ENCODE measurements at regions of chr10 and their contacts with region 1.

Region 1: DNA sequence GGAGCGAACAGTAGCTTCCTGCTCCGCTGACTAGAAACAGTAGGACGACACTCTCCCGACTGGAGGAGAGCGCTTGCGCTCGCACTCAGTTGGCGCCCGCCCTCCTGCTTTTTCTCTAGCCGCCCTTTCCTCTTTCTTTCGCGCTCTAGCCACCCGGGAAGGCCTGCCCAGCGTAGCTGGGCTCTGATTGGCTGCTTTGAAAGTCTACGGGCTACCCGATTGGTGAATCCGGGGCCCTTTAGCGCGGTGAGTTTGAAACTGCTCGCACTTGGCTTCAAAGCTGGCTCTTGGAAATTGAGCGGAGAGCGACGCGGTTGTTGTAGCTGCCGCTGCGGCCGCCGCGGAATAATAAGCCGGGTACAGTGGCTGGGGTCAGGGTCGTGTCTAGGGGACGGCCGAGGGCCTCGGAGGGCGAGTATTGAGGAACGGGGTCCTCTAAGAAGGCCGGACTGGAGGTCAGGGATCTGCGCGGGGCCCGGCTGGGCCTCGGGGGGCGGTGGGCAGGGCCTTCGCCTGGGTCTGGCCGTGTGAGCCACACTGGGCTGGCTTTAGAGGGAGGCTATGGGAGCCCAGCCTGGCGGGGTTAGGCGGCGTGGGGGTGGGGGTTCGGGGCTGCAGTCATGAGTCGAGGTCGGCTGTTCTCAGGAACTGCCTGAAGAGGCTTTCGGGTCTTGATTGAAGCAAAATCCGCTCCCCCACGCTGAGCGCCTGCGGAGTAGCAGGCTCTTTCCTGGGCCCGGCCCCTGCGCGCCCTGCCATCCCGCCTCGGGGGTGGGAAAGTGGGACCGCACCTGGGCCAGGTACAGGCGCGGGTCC is at the start of gene CDK1:
- DNase-seq: peak; percentile 97
- H3K4me3 Mint-ChIP-seq: peak within 1 kb of the TSS; percentile 99
- H3K27ac Mint-ChIP-seq: peak within 1 kb of the TSS; percentile 97
- H3K4me1 Mint-ChIP-seq: peaks cover 40% of the 10 kb centered on the region
- H3K27me3 Mint-ChIP-seq: no peaks in the 10 kb centered on the region
- total RNA-seq, gene CDK1: 121 to 125 TPM

Region 2: DNA sequence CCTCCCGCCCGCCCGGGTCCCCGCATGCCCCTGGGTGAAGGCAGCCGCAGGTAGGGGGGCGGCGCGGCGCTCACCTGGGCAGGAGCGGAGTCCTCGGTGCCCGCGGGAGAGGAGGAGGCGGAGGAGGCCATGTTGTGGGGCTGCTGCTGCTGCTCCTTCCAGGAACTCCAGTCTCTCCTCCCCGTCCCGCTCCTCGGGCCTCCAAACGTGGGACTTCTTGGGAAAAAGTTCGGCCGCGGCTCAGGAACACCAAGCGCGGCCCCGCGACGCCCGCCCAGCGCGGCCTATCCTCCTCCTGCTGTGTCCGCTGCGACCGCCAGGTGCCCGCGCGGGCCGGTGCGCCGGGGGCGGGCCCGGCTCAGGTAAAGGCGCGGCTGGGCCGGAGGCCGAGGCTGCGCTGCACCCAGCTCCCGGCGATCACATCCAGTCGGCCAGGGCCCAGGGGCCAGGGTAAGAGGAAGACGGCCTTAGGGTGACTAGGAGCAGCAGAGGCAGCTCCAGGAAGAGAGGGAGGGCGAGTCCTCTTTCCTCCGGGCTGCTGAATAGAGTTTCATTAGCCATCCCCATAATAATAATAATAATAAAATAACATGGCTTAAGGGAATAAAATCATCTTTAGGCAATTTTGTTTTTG is 45.1 kb before region 1 on chr10:
- CTCF ChIA-PET with region 1: interaction called, 3 read pairs
- POLR2A ChIA-PET with region 1: interaction called, 36 read pairs
- DNase-seq: peak; percentile 51
- H3K4me3 Mint-ChIP-seq: peak overlapping the region; percentile 88
- H3K27ac Mint-ChIP-seq: peak overlapping the region; percentile 38
- H3K4me1 Mint-ChIP-seq: peaks cover 44% of the 10 kb centered on the region
- H3K27me3 Mint-ChIP-seq: peaks cover 16% of the 10 kb centered on the region

Region 3: DNA sequence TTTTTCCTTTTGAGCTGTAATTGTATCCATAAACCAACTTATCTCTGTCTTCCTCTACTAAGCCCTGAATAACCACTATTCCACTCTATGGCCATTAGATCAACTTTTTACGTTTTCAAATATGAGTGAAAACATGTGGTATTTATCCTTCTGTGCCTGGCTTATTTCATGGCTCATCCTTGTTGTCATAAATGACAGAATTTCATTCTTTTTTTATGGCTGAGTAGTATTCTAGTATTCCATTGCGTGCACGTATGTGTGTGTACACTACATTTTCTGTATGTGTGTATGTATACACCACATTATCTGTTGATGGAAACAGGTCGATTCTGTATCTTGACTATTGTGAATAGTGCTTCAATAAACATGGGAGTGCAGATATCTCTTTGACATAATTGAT is 10.9 kb after region 1 on chr10:
- CTCF ChIA-PET with region 1: interaction called, 3 read pairs
- POLR2A ChIA-PET with region 1: interaction called, 16 read pairs
- DNase-seq: no peak
- H3K4me3 Mint-ChIP-seq: no peak overlapping the region
- H3K27ac Mint-ChIP-seq: no peak overlapping the region
- H3K4me1 Mint-ChIP-seq: peaks cover 66% of the 10 kb centered on the region
- H3K27me3 Mint-ChIP-seq: no peaks in the 10 kb centered on the region

Region 4: GRCh38 chr10:60798031-60798430 is 19.6 kb after region 1 on chr10:
- CTCF ChIA-PET with region 1: interaction called, 4 read pairs
- POLR2A ChIA-PET with region 1: interaction called, 14 read pairs
- DNase-seq: no peak
- H3K4me3 Mint-ChIP-seq: no peak overlapping the region
- H3K27ac Mint-ChIP-seq: no peak overlapping the region
- H3K4me1 Mint-ChIP-seq: peaks cover 5% of the 10 kb centered on the region
- H3K27me3 Mint-ChIP-seq: no peaks in the 10 kb centered on the region